GM10248 (cell line): ENCODE measurements at regions of chr2 and their contacts with region 1.

Region 1: GRCh38 chr2:227890495-227891079 is 19.2 kb downstream of the DAW1 start:
- DNase-seq: peak; percentile 34
- CTCF ChIP-seq: peak; percentile 57

Region 2: GRCh38 chr2:227877421-227878310 is 12.9 kb before region 1 on chr2:
- CTCF ChIA-PET with region 1: interaction called, 21 read pairs
- POLR2A ChIA-PET with region 1: no interaction called
- DNase-seq: no peak
- CTCF ChIP-seq: no peak

Region 3: DNA sequence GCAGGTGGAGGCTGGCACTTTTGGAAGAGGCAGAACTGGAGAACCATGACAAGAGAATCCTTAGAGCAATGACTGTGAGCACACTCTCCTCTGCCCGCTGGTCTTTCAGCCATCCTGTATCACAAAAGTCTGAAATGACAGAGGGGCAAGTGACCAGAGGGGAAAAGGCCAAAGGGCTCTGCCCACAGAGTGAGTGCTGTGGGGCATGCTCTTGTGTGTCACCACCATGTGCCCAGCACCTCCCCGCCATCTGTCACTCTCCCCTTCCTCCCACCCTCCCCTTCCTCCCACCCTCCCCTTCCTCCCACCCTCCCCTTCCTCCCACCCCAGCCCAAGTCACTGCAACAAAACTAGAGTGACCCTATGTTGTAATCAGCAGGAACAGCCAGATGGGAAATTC is 12.8 kb after region 1 on chr2:
- CTCF ChIA-PET with region 1: interaction called, 10 read pairs
- POLR2A ChIA-PET with region 1: no interaction called
- DNase-seq: no peak
- CTCF ChIP-seq: no peak

Region 4: GRCh38 chr2:229273723-229274338 is 1383.2 kb after region 1 on chr2:
- CTCF ChIA-PET with region 1: interaction called, 27 read pairs
- POLR2A ChIA-PET with region 1: no interaction called
- DNase-seq: peak; percentile 49
- CTCF ChIP-seq: peak; percentile 83